ENCODE measurements at regions of chr2 and their contacts with region 1.

Region 1: GRCh38 chr2:59968441-59968840 is 585.0 kb downstream of the BCL11A start:
- DNase-seq: no peak
- H3K4me3 ChIP-seq: no peak overlapping the region
- H3K27ac ChIP-seq: no peak overlapping the region
- H3K4me1 ChIP-seq: no peaks in the 10 kb centered on the region
- H3K27me3 ChIP-seq: no peaks in the 10 kb centered on the region
- CTCF ChIP-seq: no peak
- POLR2A ChIP-seq: no peak

Region 2: GRCh38 chr2:59957504-59957903 is 10.9 kb before region 1 on chr2:
- intact Hi-C with region 1: loop called (anchors 1 kb)
- DNase-seq: no peak
- H3K4me3 ChIP-seq: no peak overlapping the region
- H3K27ac ChIP-seq: no peak overlapping the region
- H3K4me1 ChIP-seq: no peaks in the 10 kb centered on the region
- H3K27me3 ChIP-seq: no peaks in the 10 kb centered on the region
- CTCF ChIP-seq: no peak
- POLR2A ChIP-seq: no peak

Measured in breast epithelium (tissue), 4 donors.